ENCODE measurements at regions of chr2 and their contacts with region 1.

Region 1: DNA sequence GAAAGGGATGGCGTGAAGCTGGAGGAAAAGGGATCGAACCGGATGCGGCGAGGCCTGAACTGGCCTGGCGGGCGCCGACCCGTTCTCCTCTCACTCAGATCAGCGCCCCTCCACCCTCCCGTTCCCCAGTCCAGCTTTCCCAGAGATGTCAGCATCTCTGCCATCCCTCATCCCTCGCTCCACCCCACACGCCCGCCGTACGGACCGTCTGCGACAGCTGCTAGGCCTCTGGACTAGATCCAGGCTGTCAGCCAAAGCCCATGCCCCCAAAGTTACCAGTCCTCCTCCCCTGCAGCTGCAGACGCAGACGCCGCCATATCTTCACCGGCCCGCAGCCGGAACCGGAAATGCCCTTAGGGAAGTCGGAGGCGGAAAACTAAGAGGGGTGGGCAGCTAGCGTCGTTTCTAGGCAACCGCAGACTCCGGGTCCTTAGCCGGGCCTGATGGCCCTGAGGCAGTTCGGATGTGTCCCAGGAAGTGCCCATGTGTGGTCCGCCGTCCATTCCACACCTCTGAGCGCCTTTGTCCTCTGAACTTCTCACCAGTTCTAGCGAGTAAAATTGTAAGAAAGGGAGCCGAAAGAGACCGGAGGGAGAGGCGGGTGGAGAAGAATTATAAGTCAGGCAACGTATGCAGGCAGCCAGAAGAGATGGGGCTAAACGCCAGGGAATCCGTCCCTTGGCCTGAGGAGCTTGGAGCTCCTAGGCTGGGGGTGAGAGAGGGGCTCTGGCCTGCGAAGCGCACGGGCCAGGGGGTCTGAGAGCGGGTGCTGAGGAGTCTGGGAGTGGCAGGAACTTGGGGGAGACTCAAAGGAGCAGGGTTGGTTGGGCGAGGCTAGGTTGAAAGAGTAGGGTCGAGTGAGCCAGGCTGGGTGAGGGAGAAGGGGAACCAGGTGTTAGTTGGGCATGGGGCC is at the starts of genes RNF25 and STK36:
- DNase-seq: peak; percentile 68 to 92 (median 80)
- ATAC-seq: peak; percentile 95 to 97
- H3K4me3 Mint-ChIP-seq: peak within 1 kb of the TSS; percentile 97 to 99 (median 98)
- H3K27ac Mint-ChIP-seq: peak within 1 kb of the TSS; percentile 93 to 99 (median 98)
- H3K4me1 Mint-ChIP-seq: peaks cover 20 to 36% (median 24%) of the 10 kb centered on the region in 4 donors
- H3K27me3 Mint-ChIP-seq: no peaks in the 10 kb centered on the region
- polyA plus RNA-seq, gene RNF25: 17.3 to 25.2 (median 20.5) TPM
- polyA plus RNA-seq, gene STK36: 3.1 to 4.3 (median 3.6) TPM

Region 2: DNA sequence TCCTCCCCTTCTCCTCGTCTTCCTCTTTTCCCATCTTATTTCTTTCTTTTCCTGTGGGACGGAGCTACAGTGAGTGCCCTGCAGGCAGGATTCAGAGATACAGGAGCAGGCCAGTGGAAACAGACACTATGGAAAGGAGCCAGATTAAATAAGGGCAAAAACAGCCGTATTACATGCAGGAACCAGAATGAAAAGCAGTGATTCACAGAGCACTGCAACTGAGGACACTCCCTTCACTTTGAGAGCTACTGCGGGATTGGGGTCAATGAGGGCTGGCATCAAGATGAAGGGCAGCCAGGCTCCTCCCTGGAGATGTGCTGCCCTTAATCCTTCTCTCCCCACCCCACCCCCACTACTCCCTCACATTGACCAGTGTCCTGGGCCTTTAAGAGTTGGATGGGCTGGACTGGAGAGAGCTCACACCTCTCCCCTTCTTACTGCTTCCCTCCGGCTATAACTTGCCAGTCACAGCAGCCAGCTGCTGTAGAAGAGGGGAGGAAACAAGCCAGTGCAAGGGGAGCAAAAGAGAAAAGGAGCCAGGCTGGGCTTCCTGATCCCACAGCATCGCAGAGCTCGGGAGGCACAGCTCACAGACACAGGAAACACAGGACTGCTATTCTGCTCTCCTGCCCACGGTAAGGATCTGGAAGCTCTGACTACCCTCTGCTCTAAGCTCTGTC is 64.3 kb before region 1 on chr2 and contains the start of gene PLCD4:
- POLR2A ChIA-PET with region 1: no interaction called
- DNase-seq: no peak
- ATAC-seq: no peak
- H3K4me3 Mint-ChIP-seq: no peak within 1 kb of the TSS
- H3K27ac Mint-ChIP-seq: no peak within 1 kb of the TSS
- H3K4me1 Mint-ChIP-seq: no peaks in the 10 kb centered on the region
- H3K27me3 Mint-ChIP-seq: peaks cover 8 to 25% (median 16%) of the 10 kb centered on the region in 5 donors
- polyA plus RNA-seq, gene PLCD4: 0.13 to 0.25 (median 0.15) TPM

Region 3: DNA sequence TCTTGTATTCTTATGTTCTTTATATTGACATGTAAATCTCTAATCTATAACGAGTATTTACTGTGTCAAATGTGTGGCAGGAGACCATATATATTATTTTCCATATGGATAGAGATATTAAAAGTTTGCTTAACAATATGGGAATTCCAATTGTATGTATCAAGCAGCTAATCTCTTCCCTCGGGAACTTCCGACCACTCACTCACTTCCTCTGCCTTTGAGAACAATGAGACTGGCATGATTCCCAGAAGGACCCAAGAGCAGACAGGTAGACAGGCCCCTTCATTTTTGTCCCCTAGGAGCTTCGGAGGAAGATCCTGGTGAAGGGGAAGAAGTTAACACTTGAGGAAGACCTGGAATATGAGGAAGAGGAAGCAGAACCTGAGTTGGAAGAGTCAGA is 40.1 kb before region 1 on chr2:
- POLR2A ChIA-PET with region 1: no interaction called
- DNase-seq: no peak
- ATAC-seq: no peak
- H3K4me3 Mint-ChIP-seq: no peak overlapping the region
- H3K27ac Mint-ChIP-seq: peak overlapping the region in 2 of 10 donors; percentile 40 to 71
- H3K4me1 Mint-ChIP-seq: peaks cover 0 to 2% (median 0%) of the 10 kb centered on the region in 4 donors
- H3K27me3 Mint-ChIP-seq: no peaks in the 10 kb centered on the region

Region 4: GRCh38 chr2:218659258-218659987 is 12.5 kb before region 1 on chr2 and contains the starts of genes BCS1L and ZNF142:
- POLR2A ChIA-PET with region 1: interaction called, 61 read pairs
- DNase-seq: peak; percentile 76 to 95 (median 90)
- ATAC-seq: peak; percentile 97 to 98
- H3K4me3 Mint-ChIP-seq: peak within 1 kb of the TSS; percentile 94 to 100 (median 99)
- H3K27ac Mint-ChIP-seq: peak within 1 kb of the TSS; percentile 89 to 98 (median 95)
- H3K4me1 Mint-ChIP-seq: peaks cover 17 to 46% (median 35%) of the 10 kb centered on the region in 4 donors
- H3K27me3 Mint-ChIP-seq: no peaks in the 10 kb centered on the region
- polyA plus RNA-seq, gene BCS1L: 15.4 to 21.0 (median 15.8) TPM
- polyA plus RNA-seq, gene ZNF142: 2.3 to 14.7 (median 5.1) TPM

Region 5: DNA sequence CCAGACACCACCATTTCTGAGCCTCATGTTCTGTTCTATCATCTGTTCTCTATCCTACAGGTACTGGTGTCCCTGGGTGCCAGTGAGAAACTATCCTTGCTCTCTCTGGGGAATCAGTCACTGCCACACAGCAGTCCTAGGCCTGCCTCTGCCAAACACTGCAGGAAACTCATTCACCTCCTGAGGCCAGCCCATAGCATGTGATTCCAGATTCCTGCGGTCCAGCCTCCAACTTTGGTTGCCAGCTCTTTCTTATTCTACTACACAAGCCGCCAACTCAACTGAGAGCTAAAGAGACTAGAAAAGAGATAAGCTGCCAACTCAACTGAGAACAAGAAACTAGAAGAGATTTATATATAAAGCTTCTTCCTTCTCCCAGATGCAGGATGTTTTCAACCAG is 29.9 kb after region 1 on chr2:
- POLR2A ChIA-PET with region 1: no interaction called
- DNase-seq: no peak
- ATAC-seq: no peak
- H3K4me3 Mint-ChIP-seq: no peak overlapping the region
- H3K27ac Mint-ChIP-seq: no peak overlapping the region
- H3K4me1 Mint-ChIP-seq: no peaks in the 10 kb centered on the region
- H3K27me3 Mint-ChIP-seq: peaks cover 0 to 3% (median 0%) of the 10 kb centered on the region in 5 donors

Region 6: DNA sequence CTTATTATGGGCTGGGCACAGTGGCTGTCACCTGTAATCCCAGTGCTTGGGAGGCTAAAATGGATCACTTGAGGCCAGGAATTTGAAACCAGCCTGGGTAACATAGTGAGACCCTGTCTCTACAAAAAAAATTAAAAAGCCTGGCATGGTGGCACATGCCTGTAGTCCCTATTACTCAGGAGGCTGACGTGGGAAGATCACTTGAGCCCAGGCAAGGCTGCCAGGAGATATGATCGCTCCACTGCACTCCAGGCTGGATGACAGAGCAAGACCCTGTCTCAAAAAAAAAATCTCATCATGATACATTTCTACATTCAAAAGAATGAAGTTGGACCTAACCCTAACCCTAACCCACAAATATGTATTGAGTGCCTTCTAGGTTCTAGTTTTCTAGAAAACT is 89.9 kb after region 1 on chr2:
- POLR2A ChIA-PET with region 1: no interaction called
- DNase-seq: no peak
- ATAC-seq: no peak
- H3K4me3 Mint-ChIP-seq: no peak overlapping the region
- H3K27ac Mint-ChIP-seq: no peak overlapping the region
- H3K4me1 Mint-ChIP-seq: no peaks in the 10 kb centered on the region
- H3K27me3 Mint-ChIP-seq: no peaks in the 10 kb centered on the region

Measured in naive thymus-derived CD8-positive, alpha-beta T cell (primary cell).